Activated naive CD4-positive, alpha-beta T cell treated with anti-CD3 and anti-CD28 coated beads for 36 hours (primary cell): ENCODE measurements at regions of chr16 and their contacts with region 1.

Region 1: GRCh38 chr16:50709053-50709684 is 15.8 kb downstream of the NOD2 start:
- DNase-seq: no peak
- H3K4me3 Mint-ChIP-seq: peak overlapping the region; percentile 41
- H3K27ac Mint-ChIP-seq: peak overlapping the region; percentile 77
- H3K4me1 Mint-ChIP-seq: peaks cover 43% of the 10 kb centered on the region
- H3K27me3 Mint-ChIP-seq: no peaks in the 10 kb centered on the region

Region 2: DNA sequence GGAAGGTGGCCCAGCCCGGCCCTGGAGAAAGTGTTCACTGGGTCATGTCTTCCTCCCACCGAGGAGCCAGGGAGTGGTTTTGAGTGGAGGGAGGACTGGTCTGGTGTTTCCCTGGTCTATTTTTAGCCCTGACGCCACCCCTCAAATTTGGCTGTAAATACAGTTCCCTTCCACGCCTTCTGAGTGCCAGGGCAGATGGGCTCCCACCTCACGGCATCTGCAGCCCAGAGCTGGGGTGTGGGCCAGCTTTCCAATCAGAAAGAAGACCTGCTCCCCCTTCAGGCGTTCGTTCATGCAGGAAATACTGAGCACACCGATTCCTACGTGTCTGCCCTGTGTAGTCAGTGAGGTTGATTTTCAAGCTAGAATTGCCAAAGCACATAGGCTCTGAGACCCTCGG is 81.8 kb before region 1 on chr16:
- CTCF ChIA-PET with region 1: no interaction called
- intact Hi-C with region 1: no loop called
- DNase-seq: peak; percentile 75
- H3K4me3 Mint-ChIP-seq: no peak overlapping the region
- H3K27ac Mint-ChIP-seq: peak overlapping the region; percentile 35
- H3K4me1 Mint-ChIP-seq: peaks cover 38% of the 10 kb centered on the region
- H3K27me3 Mint-ChIP-seq: no peaks in the 10 kb centered on the region

Region 3: DNA sequence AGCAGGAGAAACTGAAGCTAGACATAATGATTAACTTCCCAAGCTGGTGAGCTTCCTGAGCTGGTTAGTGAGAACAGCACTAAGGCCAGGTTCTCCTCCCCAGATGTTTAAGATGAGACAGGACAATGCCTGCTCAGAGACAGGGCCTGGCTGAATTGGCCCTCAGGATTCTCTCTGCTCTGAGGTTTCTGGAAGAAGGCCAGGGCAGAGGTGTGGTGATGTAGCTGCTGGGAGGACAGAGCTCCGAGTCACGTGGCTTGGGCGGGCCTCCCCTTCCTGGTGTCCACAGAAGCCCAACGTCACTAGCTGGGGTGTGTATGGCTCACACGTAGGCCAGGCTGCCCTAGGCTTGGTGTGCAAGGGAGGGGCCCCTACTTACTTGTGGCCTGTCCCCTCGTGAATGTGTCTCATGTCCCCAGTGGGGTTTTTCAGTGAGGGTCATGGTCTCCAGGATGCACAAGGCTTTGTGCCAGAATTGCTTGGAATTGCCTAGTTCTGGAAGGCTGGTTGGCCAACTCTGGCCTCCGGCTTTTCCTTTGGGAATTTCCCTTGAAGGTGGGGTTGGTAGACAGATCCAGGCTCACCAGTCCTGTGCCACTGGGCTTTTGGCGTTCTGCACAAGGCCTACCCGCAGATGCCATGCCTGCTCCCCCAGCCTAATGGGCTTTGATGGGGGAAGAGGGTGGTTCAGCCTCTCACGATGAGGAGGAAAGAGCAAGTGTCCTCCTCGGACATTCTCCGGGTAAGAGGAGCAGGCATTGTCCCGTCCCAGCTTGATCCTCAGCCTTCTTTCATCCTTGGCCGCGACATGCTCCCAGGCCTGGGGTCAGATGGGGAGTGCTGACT is 12.4 kb before region 1 on chr16:
- CTCF ChIA-PET with region 1: interaction called, 3 read pairs
- intact Hi-C with region 1: loop called (anchors 1 kb)
- DNase-seq: peak; percentile 46
- H3K4me3 Mint-ChIP-seq: no peak overlapping the region
- H3K27ac Mint-ChIP-seq: peak overlapping the region; percentile 34
- H3K4me1 Mint-ChIP-seq: peaks cover 73% of the 10 kb centered on the region
- H3K27me3 Mint-ChIP-seq: no peaks in the 10 kb centered on the region